K562 (cell line): ENCODE measurements at regions of chr1 and their contacts with region 1.

Region 1: DNA sequence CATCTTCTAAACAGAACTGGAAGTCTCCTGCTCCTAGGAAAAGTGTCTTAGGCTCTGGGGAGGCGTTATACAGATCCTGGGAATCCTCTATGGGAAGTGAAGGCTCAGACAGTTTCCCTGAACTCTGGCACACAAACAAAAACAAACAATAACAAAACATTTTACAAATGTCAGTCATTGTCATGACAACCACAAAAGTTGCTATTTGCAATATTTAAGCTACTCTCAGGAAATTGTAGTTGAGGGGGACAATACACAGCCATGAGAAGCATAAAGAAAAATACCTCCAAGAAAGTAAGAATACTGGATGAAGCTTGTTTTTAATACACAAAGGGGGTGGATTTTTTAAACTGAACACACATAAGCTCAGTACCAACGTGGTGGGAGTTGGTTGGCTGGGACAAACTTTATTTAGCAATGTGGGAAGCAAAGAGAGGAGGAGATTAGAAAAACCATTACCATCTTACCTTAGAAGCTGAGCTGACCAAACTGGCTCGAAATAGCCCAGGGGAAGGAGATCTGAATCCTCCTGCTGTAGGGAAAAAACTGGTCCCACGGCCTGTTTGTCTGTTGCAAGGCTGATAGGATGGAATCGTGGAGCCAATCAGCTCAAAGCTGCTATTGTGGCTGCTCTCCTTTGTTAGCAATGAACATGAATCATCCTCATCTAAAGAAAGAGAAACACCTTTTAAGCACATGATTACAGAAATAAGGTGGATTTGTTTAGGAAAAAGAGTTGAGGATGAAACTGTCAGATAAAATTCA is 21.7 kb downstream of the CLSPN start:
- DNase-seq: peak in 2 of 4 experiments; percentile 31 to 41
- ATAC-seq: no peak
- H3K4me3 ChIP-seq: no peak overlapping the region
- H3K27ac ChIP-seq: no peak overlapping the region
- H3K4me1 ChIP-seq: no peaks in the 10 kb centered on the region
- H3K27me3 ChIP-seq: no peaks in the 10 kb centered on the region
- CTCF ChIP-seq: no peak
- EP300 ChIP-seq: no peak
- POLR2A ChIP-seq: no peak
- RAD21 ChIP-seq: no peak

Region 2: DNA sequence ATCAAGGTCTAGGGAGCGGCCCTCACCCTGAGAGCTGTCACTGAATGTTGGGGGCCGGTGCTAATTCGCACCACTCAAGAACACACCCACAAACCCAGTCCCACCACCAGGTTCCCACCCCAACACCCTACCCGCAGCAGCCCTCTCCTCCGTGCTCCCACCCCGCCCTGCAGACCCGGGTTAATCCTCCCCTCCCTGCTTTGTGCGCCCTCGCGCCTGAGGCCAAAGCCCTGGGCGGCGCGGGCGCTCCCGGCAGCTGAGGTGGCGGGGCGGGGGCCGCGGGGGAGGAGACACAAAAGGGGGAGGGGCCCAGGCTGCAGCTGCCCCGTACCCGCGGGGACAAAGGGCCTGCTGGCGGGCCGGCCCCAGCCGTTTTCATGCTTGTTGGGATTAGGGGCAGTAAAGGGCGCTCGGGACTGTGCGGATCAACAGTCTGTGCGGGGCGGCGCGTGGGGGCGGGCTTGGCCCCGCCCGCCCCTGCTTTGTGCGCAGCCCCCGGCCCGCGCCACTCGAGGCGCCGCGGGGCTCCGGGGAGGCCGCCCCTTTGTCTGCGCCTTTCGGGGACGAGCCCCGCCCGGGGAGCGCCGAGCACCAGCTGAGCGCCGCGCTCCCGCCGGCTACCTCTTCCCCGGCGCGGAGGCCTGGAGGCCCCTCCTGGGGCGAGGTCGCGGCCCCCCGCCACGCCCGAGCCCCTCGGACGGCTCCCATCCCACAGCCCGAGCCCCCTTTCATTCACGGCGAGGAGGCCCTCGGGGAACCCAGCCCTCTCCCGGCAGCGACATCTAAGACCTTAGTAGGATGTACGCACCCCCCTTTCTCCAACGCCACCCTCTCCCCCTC is 40.3 kb before region 1 on chr1:
- CTCF ChIA-PET with region 1: no interaction called
- POLR2A ChIA-PET with region 1: no interaction called
- in situ Hi-C with region 1: no loop called
- intact Hi-C with region 1: no loop called
- DNase-seq: peak; percentile 66 to 93 (median 88)
- ATAC-seq: peak; percentile 88
- H3K4me3 ChIP-seq: peak overlapping the region; percentile 37
- H3K27ac ChIP-seq: no peak overlapping the region
- H3K4me1 ChIP-seq: peaks cover 0 to 17% of the 10 kb centered on the region in 2 experiments; a peak in 3 of 5 replicates
- H3K27me3 ChIP-seq: peaks cover 39 to 48% of the 10 kb centered on the region in 2 experiments
- CTCF ChIP-seq: no peak
- EP300 ChIP-seq: no peak
- POLR2A ChIP-seq: no peak
- RAD21 ChIP-seq: no peak

Region 3: DNA sequence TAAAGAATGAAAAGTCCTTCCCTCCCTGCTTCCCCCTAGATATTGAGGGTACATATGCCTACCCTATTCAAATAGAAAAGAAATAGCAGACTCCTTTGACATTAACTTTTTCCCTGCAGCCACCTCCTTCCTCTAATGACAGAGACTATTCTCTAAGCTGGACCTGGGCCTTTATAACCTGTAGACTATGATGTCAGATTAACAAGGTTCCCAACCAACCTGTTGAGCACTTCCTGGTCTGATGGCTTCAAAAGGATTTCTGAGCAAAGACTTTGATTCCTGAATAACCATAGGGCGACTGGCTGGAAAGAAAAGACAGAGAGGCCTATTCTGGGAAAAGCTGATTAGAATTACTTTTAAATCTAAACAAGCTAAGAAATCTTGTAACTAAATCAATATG is 11.0 kb before region 1 on chr1:
- CTCF ChIA-PET with region 1: no interaction called
- POLR2A ChIA-PET with region 1: interaction called, 12 read pairs
- in situ Hi-C with region 1: no loop called
- intact Hi-C with region 1: no loop called
- DNase-seq: no peak
- ATAC-seq: no peak
- H3K4me3 ChIP-seq: no peak overlapping the region
- H3K27ac ChIP-seq: no peak overlapping the region
- H3K4me1 ChIP-seq: no peaks in the 10 kb centered on the region
- H3K27me3 ChIP-seq: no peaks in the 10 kb centered on the region
- CTCF ChIP-seq: no peak
- EP300 ChIP-seq: no peak
- POLR2A ChIP-seq: no peak
- RAD21 ChIP-seq: no peak

Region 4: GRCh38 chr1:35894183-35894582 is 146.1 kb after region 1 on chr1:
- CTCF ChIA-PET with region 1: no interaction called
- POLR2A ChIA-PET with region 1: no interaction called
- in situ Hi-C with region 1: no loop called
- intact Hi-C with region 1: no loop called
- DNase-seq: peak; percentile 65 to 88 (median 74)
- ATAC-seq: peak; percentile 85
- H3K4me3 ChIP-seq: no peak overlapping the region
- H3K27ac ChIP-seq: peak overlapping the region; percentile 5; the same call in 1 of the 3 replicates
- H3K4me1 ChIP-seq: peaks cover 10 to 12% of the 10 kb centered on the region in 2 experiments; a peak in 4 of 5 replicates
- H3K27me3 ChIP-seq: no peaks in the 10 kb centered on the region
- CTCF ChIP-seq: no peak; a peak in 1 of 6 replicates
- EP300 ChIP-seq: no peak
- POLR2A ChIP-seq: no peak
- RAD21 ChIP-seq: no peak